PC-9 (cell line): ENCODE measurements at regions of chr11 and their contacts with region 1.

Region 1: DNA sequence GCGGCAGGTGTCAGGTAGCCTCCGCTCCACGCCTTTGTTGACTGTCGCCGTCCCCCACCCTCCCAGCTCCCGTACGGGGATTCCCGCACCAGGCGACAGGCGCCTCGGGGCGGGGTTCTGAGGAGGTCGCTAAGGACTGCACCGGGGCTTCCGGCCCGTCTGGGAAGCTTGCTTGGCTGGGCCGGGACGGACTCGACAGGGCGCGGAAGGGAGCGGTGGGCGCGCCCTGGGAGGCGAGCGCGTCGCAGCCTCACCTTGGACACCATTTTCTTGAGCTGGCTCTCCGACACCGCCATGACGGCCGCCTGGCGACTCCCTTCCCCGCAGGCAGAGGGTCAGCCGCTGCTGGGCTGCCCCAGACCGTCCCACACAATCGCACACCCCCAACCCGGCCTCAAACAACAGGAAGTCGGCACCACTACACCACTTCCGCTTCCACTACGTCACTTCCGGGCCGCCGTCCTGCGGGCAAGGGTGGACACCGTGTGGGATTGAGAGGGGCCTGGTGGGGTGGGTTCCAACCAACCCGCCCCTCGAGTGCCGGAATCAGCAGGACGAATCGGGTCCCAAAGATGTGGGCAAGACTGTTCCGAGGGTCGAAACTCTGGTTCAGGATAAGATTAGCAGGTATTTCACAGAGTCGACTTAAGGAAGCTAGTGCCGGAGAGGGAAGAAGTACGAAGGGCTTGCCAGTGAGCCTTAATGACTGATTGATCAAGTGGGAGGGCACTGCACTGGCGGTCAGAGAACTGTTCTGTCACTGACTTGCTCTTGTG is at the start of gene TSG101:
- DNase-seq: peak; percentile 88 to 92
- H3K4me3 ChIP-seq: peak within 1 kb of the TSS; percentile 91
- H3K27ac ChIP-seq: peak within 1 kb of the TSS; percentile 73
- H3K4me1 ChIP-seq: peaks cover 29% of the 10 kb centered on the region
- H3K27me3 ChIP-seq: no peaks in the 10 kb centered on the region
- CTCF ChIP-seq: no peak
- total RNA-seq, gene TSG101: 81.1 and 97.1 TPM in 2 replicates

Region 2: DNA sequence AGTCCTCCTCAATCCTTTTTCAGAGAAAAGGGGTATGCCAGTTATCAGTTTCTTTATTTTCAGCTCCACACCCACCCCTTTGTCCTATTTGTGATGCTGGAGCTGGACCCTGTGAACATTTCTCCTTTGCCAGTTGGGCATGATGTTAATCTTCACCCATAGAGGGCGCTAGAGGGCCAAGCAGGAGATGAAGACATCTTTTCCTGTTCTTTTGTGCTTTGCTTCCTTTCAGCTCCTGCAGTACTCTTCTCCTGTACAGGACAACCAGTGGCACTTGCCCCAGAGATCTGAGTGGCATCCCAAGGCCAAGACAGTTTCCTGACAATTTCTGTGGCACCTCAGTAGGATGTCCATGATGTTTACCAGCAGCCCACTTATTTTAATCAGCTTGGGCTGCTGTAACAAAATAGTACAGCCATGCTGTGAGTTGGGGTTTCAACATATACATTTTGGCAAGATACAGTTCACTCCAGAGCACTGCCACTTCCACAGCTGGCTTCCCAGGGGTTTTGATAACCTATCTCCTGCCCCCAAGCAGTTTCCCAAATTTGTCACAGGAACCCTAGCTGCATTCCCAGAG is 282.8 kb before region 1 on chr11:
- CTCF ChIA-PET with region 1: no interaction called
- POLR2A ChIA-PET with region 1: no interaction called
- intact Hi-C with region 1: loop called (anchors 2 kb)
- DNase-seq: peak; percentile 57 to 66
- H3K4me3 ChIP-seq: no peak overlapping the region
- H3K27ac ChIP-seq: no peak overlapping the region
- H3K4me1 ChIP-seq: peaks cover 6% of the 10 kb centered on the region; the same call in 1 of the 2 replicates
- H3K27me3 ChIP-seq: no peaks in the 10 kb centered on the region
- CTCF ChIP-seq: peak; percentile 97

Region 3: GRCh38 chr11:18321980-18322711 is 204.6 kb before region 1 on chr11 and contains the starts of genes GTF2H1 and HPS5:
- CTCF ChIA-PET with region 1: interaction called, 3 read pairs
- POLR2A ChIA-PET with region 1: no interaction called
- intact Hi-C with region 1: loop called (anchors 5 kb)
- DNase-seq: peak; percentile 95 to 97
- H3K4me3 ChIP-seq: peak within 1 kb of the TSS; percentile 82
- H3K27ac ChIP-seq: peak within 1 kb of the TSS; percentile 93
- H3K4me1 ChIP-seq: peaks cover 45% of the 10 kb centered on the region
- H3K27me3 ChIP-seq: no peaks in the 10 kb centered on the region
- CTCF ChIP-seq: no peak
- total RNA-seq, gene GTF2H1: 72.9 and 89.1 TPM in 2 replicates
- total RNA-seq, gene HPS5: 35.2 and 39.2 TPM in 2 replicates

Region 4: GRCh38 chr11:18492888-18493287 is 33.8 kb before region 1 on chr11:
- CTCF ChIA-PET with region 1: no interaction called
- POLR2A ChIA-PET with region 1: interaction called, 3 read pairs
- intact Hi-C with region 1: loop called (anchors 5 kb)
- DNase-seq: peak in 1 of 2 experiments; percentile 52
- H3K4me3 ChIP-seq: no peak overlapping the region
- H3K27ac ChIP-seq: peak overlapping the region; percentile 19
- H3K4me1 ChIP-seq: peaks cover 54% of the 10 kb centered on the region
- H3K27me3 ChIP-seq: no peaks in the 10 kb centered on the region
- CTCF ChIP-seq: no peak

Region 5: GRCh38 chr11:18634140-18635032 is 107.7 kb after region 1 on chr11 and contains the start of gene SPTY2D1:
- CTCF ChIA-PET with region 1: no interaction called
- POLR2A ChIA-PET with region 1: no interaction called
- intact Hi-C with region 1: loop called (anchors 5 kb)
- DNase-seq: peak; percentile 98
- H3K4me3 ChIP-seq: peak within 1 kb of the TSS; percentile 95
- H3K27ac ChIP-seq: peak within 1 kb of the TSS; percentile 83
- H3K4me1 ChIP-seq: peaks cover 15% of the 10 kb centered on the region
- H3K27me3 ChIP-seq: no peaks in the 10 kb centered on the region
- CTCF ChIP-seq: no peak
- total RNA-seq, gene SPTY2D1: 22.3 and 23.7 TPM in 2 replicates